ENCODE measurements at regions of chr1 and their contacts with region 1.

Region 1: GRCh38 chr1:223081181-223081994 is 61.7 kb downstream of the TLR5 start:
- DNase-seq: peak; percentile 87 to 94 (median 90)
- ATAC-seq: peak; percentile 98
- H3K4me3 ChIP-seq: peak overlapping the region; percentile 22
- H3K27ac ChIP-seq: no peak overlapping the region
- H3K4me1 ChIP-seq: peaks cover 0 to 12% of the 10 kb centered on the region in 2 experiments; a peak in 3 of 5 replicates
- H3K27me3 ChIP-seq: peaks cover 17 to 77% of the 10 kb centered on the region in 2 experiments; a peak in 4 of 5 replicates
- CTCF ChIP-seq: peak; percentile 92 to 98 (median 94)
- EP300 ChIP-seq: no peak
- POLR2A ChIP-seq: no peak
- RAD21 ChIP-seq: peak; percentile 98

Region 2: DNA sequence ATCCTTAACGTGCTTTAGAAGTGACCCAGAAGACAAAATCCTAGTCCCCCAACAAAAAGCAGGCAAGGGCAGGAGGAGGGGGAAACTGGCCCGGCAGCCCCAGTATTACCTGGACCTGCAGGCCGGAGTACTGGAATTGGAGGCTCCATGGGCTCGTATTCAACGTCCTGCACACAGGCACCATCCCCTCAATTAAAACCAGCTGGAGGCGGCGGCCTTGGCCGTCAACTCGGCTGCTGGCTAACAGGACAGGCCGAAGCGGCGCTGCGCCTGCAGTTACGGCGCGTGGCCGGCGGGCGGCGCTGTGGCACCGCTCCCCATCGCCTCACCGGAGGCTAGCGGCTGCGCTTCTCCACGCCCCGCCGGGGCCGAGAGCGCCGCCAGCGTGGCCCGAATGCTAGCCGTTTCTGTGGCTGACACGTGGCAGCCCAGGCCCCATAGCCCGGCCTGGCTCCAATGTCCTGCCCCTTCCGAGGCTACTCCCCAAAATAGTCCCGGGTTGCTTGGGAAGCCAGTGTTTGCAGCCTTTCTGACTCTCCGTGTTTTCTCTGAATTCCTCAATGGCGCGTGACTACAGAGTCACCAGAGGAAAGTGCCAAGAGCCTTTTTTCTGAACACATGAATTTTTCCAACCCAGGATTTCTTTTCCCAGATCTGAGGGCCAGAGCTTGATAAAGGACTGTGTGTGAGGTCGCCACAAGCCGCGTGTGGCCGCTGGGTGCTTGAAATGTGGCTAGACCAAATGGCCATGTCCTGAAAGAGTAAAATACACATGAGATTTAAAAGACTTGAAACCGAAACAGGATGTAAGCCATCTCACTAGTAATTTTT is 616.0 kb before region 1 on chr1:
- CTCF ChIA-PET with region 1: interaction called, 4 read pairs
- POLR2A ChIA-PET with region 1: no interaction called
- in situ Hi-C with region 1: loop called (anchors 10 kb)
- intact Hi-C with region 1: loop called (anchors 1 kb)
- DNase-seq: peak; percentile 95 to 97 (median 96)
- ATAC-seq: peak; percentile 99
- H3K4me3 ChIP-seq: peak overlapping the region; percentile 55
- H3K27ac ChIP-seq: peak overlapping the region; percentile 92
- H3K4me1 ChIP-seq: peaks cover 10 to 21% of the 10 kb centered on the region in 2 experiments
- H3K27me3 ChIP-seq: no peaks in the 10 kb centered on the region
- CTCF ChIP-seq: peak; percentile 98 to 99 (median 98)
- EP300 ChIP-seq: peak; percentile 32
- POLR2A ChIP-seq: peak; percentile 80
- RAD21 ChIP-seq: peak; percentile 99 to 100

Region 3: GRCh38 chr1:222643938-222644635 is 437.3 kb before region 1 on chr1:
- CTCF ChIA-PET with region 1: no interaction called
- POLR2A ChIA-PET with region 1: no interaction called
- in situ Hi-C with region 1: no loop called
- intact Hi-C with region 1: loop called (anchors 5 kb)
- DNase-seq: peak; percentile 95 to 100 (median 96)
- ATAC-seq: peak; percentile 97
- H3K4me3 ChIP-seq: peak overlapping the region; percentile 88
- H3K27ac ChIP-seq: peak overlapping the region; percentile 88
- H3K4me1 ChIP-seq: no peaks in the 10 kb centered on the region; a peak in 2 of 5 replicates
- H3K27me3 ChIP-seq: no peaks in the 10 kb centered on the region
- CTCF ChIP-seq: no peak; a peak in 1 of 6 replicates
- EP300 ChIP-seq: peak; percentile 49
- POLR2A ChIP-seq: peak; percentile 98
- RAD21 ChIP-seq: no peak

Region 4: DNA sequence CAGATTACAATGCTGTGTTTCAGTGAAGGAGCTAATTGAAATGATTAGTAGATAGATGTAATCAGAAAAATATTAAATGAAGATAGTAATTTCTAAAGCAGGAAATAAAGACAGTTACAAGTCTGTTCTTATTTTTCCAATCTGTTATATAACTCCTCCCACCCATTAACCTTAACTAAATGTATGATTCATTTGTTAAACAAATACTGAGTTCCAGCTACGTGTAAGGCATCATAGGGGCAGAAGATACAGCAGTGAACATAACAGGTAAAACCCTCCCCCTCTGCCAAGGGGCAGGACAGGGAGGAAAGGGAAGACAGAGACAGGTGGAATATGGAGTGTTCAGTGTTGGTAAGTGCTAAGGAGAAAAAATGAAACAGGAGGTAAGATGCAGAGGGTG is 344.4 kb before region 1 on chr1 and contains the start of gene FAM177B:
- CTCF ChIA-PET with region 1: interaction called, 14 read pairs
- POLR2A ChIA-PET with region 1: no interaction called
- in situ Hi-C with region 1: no loop called
- intact Hi-C with region 1: loop called (anchors 1 kb)
- DNase-seq: no peak
- ATAC-seq: no peak
- H3K4me3 ChIP-seq: no peak within 1 kb of the TSS
- H3K27ac ChIP-seq: no peak within 1 kb of the TSS
- H3K4me1 ChIP-seq: no peaks in the 10 kb centered on the region
- H3K27me3 ChIP-seq: no peaks in the 10 kb centered on the region
- CTCF ChIP-seq: no peak
- EP300 ChIP-seq: no peak
- POLR2A ChIP-seq: no peak
- RAD21 ChIP-seq: no peak
- polyA plus RNA-seq, gene FAM177B: not detected

Region 5: GRCh38 chr1:222792744-222793143 is 288.6 kb before region 1 on chr1:
- CTCF ChIA-PET with region 1: interaction called, 13 read pairs
- POLR2A ChIA-PET with region 1: no interaction called
- in situ Hi-C with region 1: loop called (anchors 10 kb)
- intact Hi-C with region 1: loop called (anchors 1 kb)
- DNase-seq: peak in 3 of 4 experiments; percentile 16 to 38 (median 29)
- ATAC-seq: peak; percentile 42; the same call in 1 of the 3 replicates
- H3K4me3 ChIP-seq: no peak overlapping the region
- H3K27ac ChIP-seq: no peak overlapping the region
- H3K4me1 ChIP-seq: no peaks in the 10 kb centered on the region
- H3K27me3 ChIP-seq: 0 out of 5 replicates have a peak, but pooled peaks cover 0 to 5% of the 10 kb centered on the region in 2 experiments
- CTCF ChIP-seq: peak in 2 of 3 experiments; percentile 33 to 64; a peak in 4 of 6 replicates
- EP300 ChIP-seq: no peak
- POLR2A ChIP-seq: no peak
- RAD21 ChIP-seq: peak; percentile 79 to 82

Region 6: DNA sequence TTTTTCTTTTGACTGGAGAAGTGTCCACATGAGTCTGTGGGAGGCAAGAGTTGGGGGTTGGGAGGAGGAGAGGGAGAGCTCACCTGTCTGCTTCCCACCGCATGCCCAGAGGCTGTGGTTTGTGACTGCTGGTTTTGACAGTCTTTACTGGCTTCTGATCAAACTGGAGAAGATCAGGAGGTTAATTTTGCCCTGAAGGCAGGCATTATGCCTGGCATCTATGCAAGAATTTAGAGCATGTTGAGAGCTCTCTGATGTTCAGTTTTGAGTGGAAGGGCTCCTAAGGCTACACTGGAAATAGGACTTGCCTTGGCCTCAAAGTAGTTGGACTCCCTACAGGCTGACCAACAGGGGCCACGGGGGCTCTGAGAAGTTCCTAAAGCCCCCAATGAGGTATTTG is 39.9 kb before region 1 on chr1:
- CTCF ChIA-PET with region 1: no interaction called
- POLR2A ChIA-PET with region 1: no interaction called
- in situ Hi-C with region 1: no loop called
- intact Hi-C with region 1: no loop called
- DNase-seq: no peak
- ATAC-seq: no peak
- H3K4me3 ChIP-seq: no peak overlapping the region
- H3K27ac ChIP-seq: no peak overlapping the region
- H3K4me1 ChIP-seq: peaks cover 1 to 2% of the 10 kb centered on the region in 2 experiments; a peak in 3 of 5 replicates
- H3K27me3 ChIP-seq: peaks cover 17 to 40% of the 10 kb centered on the region in 2 experiments; a peak in 3 of 5 replicates
- CTCF ChIP-seq: no peak
- EP300 ChIP-seq: no peak
- POLR2A ChIP-seq: no peak
- RAD21 ChIP-seq: no peak

Region 7: GRCh38 chr1:223068900-223069665 is 12.3 kb before region 1 on chr1:
- CTCF ChIA-PET with region 1: no interaction called
- POLR2A ChIA-PET with region 1: no interaction called
- in situ Hi-C with region 1: no loop called
- intact Hi-C with region 1: no loop called
- DNase-seq: no peak
- ATAC-seq: no peak
- H3K4me3 ChIP-seq: no peak overlapping the region
- H3K27ac ChIP-seq: no peak overlapping the region
- H3K4me1 ChIP-seq: no peaks in the 10 kb centered on the region
- H3K27me3 ChIP-seq: peaks cover 11 to 21% of the 10 kb centered on the region in 2 experiments; a peak in 3 of 5 replicates
- CTCF ChIP-seq: no peak
- EP300 ChIP-seq: no peak
- POLR2A ChIP-seq: no peak
- RAD21 ChIP-seq: no peak

Region 8: DNA sequence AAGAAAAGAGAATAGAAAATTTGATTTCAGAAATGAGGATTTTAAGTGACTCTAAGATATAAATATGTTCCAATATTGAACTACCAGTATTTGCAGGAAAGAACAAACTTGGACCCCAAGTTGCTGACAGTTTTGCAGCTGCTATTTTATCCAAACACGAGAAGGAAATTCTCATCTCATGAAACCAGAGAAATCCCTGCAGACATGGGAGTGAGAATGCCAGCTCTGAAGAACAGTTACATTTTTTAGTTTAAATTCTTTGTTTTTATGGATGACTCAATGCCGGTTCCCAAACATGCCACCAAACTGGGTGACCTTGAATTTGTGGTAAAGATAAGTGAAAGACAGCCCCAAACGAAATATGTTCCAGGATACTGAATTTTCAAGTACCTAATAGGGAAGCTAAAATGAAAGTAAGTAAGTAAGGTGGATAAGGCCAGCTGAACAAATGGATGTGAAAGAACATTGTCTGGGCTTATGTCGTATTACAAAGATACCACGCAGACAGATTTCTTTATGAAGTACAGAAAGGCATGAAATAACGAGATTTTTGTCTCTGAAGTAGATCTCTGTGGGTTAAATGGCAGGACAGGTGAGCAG is 41.7 kb after region 1 on chr1:
- CTCF ChIA-PET with region 1: no interaction called
- POLR2A ChIA-PET with region 1: no interaction called
- in situ Hi-C with region 1: no loop called
- intact Hi-C with region 1: loop called (anchors 1 kb)
- DNase-seq: no peak
- ATAC-seq: no peak
- H3K4me3 ChIP-seq: no peak overlapping the region
- H3K27ac ChIP-seq: no peak overlapping the region
- H3K4me1 ChIP-seq: no peaks in the 10 kb centered on the region
- H3K27me3 ChIP-seq: no peaks in the 10 kb centered on the region
- CTCF ChIP-seq: no peak
- EP300 ChIP-seq: no peak
- POLR2A ChIP-seq: no peak
- RAD21 ChIP-seq: no peak

Region 9: DNA sequence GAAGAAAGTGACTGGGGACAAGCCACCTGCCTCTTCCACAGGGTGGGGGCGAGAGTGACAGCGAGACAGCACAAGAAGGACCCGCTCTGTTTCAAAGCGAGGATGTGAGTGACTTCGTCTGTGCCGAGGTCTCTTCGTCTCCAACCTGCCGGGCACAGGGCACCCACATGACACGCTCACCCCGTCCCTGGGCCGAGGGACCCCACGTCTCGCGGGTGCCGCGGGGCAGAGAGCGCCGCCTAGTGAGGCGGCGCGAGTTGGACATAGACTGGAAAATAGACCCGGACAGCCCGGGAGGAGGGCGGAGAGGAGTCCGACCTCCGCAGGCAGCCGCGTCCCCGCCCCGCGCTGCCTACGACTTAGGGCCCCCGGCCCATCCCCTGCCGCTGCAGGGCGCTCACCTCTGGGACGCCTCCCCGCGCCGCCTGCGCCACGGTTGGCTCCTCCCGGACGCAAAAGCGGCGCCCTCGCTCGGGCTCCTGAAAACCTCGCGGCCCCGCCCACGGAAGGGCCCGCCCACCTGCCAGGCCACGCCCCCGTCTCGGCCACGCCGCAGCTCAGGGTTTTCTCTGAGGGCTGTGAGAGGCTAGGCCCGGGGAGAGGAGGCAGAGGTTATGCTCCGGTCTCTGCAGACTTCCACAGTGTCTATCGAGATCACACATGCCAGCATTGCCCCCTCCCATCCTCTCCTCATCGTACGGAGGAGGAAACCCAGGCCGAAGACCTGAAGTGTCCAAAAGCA is 61.6 kb after region 1 on chr1 and contains the start of gene TLR5:
- CTCF ChIA-PET with region 1: no interaction called
- POLR2A ChIA-PET with region 1: no interaction called
- in situ Hi-C with region 1: no loop called
- intact Hi-C with region 1: no loop called
- DNase-seq: peak; percentile 95 to 98 (median 96)
- ATAC-seq: peak; percentile 96
- H3K4me3 ChIP-seq: peak within 1 kb of the TSS; percentile 50
- H3K27ac ChIP-seq: peak within 1 kb of the TSS; percentile 60
- H3K4me1 ChIP-seq: peaks cover 22 to 23% of the 10 kb centered on the region in 2 experiments
- H3K27me3 ChIP-seq: no peaks in the 10 kb centered on the region
- CTCF ChIP-seq: peak; percentile 85 to 92 (median 87)
- EP300 ChIP-seq: no peak
- POLR2A ChIP-seq: peak; percentile 86
- RAD21 ChIP-seq: peak; percentile 63 to 65
- polyA plus RNA-seq, gene TLR5: 0.93 to 1.0 TPM